Transverse colon (tissue), 4 donors: ENCODE measurements at regions of chr6 and their contacts with region 1.

Region 1: DNA sequence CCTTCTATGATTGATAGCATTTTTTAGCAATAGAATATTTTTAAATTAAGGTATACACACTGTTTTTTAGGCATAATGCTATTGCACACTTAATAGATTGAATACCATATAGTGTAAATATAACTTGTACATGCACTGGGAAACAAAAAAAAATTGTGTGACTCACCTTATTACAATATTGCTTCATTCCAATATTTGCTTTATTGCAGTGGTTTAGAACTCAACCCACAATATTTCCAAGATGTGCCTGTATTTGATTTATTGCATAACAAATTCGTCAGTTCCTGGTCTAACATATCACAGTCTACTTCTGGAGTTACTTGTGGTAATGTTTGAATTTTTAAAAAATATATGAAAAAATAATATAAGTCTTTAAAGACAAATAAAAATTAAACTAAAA is 41.9 kb upstream of the DEFB112 start:
- DNase-seq: no peak
- H3K4me3 ChIP-seq: no peak overlapping the region
- H3K27ac ChIP-seq: no peak overlapping the region
- H3K4me1 ChIP-seq: no peaks in the 10 kb centered on the region
- H3K27me3 ChIP-seq: no peaks in the 10 kb centered on the region
- CTCF ChIP-seq: no peak
- EP300 ChIP-seq: no peak
- POLR2A ChIP-seq: no peak

Region 2: DNA sequence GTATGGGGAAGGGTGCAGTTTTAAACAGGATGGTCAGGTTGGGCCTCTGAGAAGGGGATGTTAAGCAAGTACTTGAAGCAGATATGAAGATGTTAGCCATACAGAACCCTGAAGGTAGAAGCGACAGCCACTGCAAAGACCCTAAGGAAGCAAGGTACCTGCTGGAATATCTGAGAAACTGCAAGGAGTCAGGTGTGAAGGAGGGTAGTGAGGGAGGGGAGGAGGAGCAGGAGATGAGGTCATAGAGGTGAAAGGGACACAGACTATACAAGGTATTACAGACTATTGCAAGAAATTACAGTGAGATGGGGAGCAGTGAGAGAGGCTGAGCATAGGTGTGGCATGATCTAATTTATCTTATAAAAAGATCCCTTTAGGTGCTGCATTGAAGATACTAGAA is 19.7 kb before region 1 on chr6:
- in situ Hi-C with region 1: no loop called
- intact Hi-C with region 1: loop called (anchors 1 kb)
- DNase-seq: no peak
- H3K4me3 ChIP-seq: no peak overlapping the region
- H3K27ac ChIP-seq: no peak overlapping the region
- H3K4me1 ChIP-seq: no peaks in the 10 kb centered on the region
- H3K27me3 ChIP-seq: no peaks in the 10 kb centered on the region
- CTCF ChIP-seq: no peak
- EP300 ChIP-seq: no peak
- POLR2A ChIP-seq: no peak

Region 3: GRCh38 chr6:51360287-51360686 is 1268.6 kb after region 1 on chr6:
- in situ Hi-C with region 1: no loop called
- intact Hi-C with region 1: no loop called
- DNase-seq: no peak
- H3K4me3 ChIP-seq: no peak overlapping the region
- H3K27ac ChIP-seq: no peak overlapping the region
- H3K4me1 ChIP-seq: no peaks in the 10 kb centered on the region
- H3K27me3 ChIP-seq: no peaks in the 10 kb centered on the region
- CTCF ChIP-seq: no peak
- EP300 ChIP-seq: no peak
- POLR2A ChIP-seq: no peak